Ascending aorta (tissue), 2 donors: ENCODE measurements at regions of chr5 and their contacts with region 1.

Region 1: DNA sequence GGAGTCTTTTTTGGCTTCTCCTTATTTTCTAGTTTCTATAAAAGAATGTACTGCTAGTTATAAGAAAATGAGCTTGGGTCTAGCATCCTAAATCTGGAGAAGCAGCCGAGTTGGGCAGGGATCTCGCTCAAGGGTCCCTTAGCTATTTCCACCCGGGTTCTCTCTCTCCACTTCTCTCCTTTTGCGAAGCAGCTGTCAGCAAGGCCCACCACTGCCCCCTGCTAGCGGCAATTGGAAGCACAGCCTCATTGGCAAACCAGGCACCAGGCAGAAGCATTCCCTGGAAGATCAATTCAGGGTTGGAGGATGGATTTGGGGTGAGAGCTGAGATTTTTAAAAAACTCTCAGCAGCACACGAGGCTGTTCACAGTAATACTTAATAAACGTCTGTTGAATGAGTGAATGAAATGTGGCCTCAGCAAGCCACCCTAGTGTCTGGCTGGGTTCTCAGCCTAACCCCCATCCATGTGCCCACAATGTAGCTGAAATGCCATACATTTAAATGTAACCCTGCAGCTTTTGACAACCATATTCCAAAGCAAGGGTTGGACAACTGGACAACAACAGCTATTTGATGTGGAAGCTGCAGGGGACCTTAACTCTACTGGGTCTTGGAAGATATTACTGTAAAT is 34.6 kb upstream of the TNIP1 start:
- DNase-seq: peak in 1 of 2 donors; percentile 88
- H3K4me3 ChIP-seq: no peak overlapping the region
- H3K27ac ChIP-seq: no peak overlapping the region
- H3K4me1 ChIP-seq: no peaks in the 10 kb centered on the region
- H3K27me3 ChIP-seq: no peaks in the 10 kb centered on the region
- CTCF ChIP-seq: peak; percentile 87 to 95 (median 91)

Region 2: DNA sequence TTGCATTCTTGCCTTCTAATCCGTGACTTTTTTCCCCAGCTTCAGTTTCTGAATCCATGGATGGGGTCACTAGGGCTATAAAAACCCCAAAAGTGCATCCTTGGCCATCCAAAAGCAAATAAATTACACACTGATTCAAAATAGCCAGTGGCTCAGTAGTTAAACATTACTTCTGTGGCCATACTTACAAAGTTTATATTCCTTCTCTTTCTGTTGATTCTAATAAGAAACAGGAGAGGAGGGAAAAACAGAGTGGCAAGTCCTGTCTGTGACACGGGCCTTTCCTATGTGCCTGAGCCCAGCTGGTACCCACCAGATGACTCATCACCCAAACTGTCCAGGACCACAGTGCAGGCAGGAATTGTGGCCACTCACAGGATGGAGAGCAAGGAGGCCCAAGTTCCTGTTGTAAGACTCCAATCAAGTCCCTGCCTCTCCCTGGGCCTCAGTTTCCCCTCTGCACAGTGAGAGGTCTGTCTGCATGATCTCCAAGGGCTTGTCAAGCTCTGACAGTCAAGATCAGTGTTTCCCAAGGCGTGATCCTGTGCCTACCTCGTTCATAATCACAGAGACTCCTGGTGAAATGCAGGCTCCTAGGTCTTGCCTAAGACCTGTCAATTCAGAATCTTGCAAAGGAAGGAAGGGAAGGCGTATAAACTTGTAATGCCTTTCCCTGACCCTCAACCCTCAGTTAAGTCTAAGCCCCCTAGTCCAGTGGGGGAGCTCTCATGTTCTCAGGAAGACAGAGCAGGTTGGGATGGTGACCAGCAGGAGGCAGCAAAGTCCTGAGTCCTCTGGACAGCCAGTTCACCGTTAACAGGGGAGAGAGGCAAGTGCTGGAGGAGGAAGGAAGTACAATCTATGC is 64.1 kb before region 1 on chr5:
- intact Hi-C with region 1: loop called (anchors 1 kb)
- DNase-seq: peak in 1 of 2 donors; percentile 91
- H3K4me3 ChIP-seq: no peak overlapping the region
- H3K27ac ChIP-seq: no peak overlapping the region
- H3K4me1 ChIP-seq: peaks cover 0 to 6% of the 10 kb centered on the region in 2 donors
- H3K27me3 ChIP-seq: no peaks in the 10 kb centered on the region
- CTCF ChIP-seq: peak; percentile 80 to 87 (median 86)